ENCODE measurements at regions of chr3 and their contacts with region 1.

Region 1: DNA sequence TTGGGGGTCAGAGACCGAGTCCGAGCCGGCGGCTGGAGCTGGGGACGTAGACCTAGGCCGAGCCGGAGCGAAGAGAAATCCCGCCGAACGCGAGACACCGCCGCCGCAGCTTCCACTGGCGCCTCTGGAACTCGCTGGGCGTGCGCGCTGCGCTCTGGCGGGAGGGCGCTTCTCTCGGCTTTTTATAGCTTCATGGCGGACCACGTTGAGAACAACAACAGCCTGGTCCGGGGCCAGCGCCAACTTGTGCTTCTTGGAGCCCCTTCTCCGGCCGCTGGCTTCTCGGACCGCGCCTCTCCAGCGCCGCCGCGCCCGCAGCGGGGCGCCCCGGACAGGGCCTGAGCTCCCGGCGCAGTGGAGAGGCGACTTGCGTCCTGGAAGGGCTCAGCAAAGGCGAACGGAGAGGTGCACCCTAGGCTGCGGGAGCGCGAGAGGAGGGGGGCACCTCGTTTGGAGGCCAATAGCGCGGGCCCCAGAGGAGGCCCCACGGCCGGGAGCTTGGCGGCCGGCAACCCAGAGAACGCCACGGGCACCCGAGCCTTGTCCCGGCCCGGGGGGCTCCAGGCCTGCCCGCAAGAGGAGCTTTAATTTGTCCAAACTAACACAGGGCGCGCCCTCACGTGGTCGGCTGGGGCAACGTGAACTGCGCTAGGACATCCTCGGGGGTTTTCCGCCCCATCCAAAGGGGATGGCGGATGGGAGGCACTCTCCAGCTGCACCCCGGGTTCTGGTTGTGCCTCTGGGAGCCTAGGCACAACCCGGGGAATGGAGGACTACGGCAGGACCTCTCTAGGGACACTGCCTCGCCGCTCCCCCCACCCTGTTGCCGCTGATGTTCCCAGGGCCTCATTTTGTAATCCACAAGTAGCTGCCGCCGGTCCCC is 37.7 kb downstream of the HMCES start:
- DNase-seq: peak; percentile 92
- ATAC-seq: peak; percentile 48
- H3K4me3 Mint-ChIP-seq: peak overlapping the region; percentile 91
- H3K27ac Mint-ChIP-seq: peak overlapping the region; percentile 66
- H3K4me1 Mint-ChIP-seq: peaks cover 34% of the 10 kb centered on the region
- H3K27me3 Mint-ChIP-seq: no peaks in the 10 kb centered on the region

Region 2: DNA sequence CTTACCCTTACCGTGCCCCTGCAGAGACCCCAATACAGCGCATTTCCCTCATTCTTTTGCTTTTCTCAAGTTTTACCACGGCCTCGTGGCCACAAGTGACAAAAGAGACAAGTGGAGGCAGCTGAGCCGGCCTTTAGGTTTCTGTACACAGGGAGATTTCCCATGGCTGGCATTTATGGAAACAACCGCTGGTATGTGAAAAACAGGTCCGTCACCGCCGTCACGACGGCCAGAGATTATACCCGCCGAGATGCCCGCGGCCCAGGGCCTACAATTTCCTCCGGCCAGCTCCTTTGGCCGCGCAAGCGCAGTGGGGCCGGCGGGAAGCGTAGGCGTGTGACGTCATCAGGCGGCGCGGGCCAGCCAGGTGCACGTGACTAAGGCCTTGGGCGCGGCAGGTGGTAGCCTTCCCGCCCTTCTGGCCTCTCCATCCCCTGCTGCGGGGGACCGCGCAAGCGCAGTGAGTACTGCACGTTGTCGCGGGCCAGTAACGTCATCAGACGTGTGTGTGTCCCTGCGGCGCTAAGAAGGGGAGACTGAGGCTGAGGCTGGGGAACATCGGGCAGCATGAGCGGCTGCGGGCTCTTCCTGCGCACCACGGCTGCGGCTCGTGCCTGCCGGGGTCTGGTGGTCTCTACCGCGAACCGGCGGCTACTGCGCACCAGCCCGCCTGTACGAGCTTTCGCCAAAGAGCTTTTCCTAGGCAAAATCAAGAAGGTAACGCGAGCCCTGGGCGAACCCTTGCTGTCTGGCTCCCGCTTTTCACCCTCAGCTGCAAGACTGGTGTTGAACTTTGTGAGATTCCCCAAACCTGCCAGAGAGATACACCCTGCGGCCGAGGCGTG is 437.0 kb before region 1 on chr3 and contains the start of gene ACAD9:
- CTCF ChIA-PET with region 1: interaction called, 4 read pairs
- POLR2A ChIA-PET with region 1: interaction called, 15 read pairs
- DNase-seq: peak; percentile 97
- ATAC-seq: peak; percentile 96
- H3K4me3 Mint-ChIP-seq: peak within 1 kb of the TSS; percentile 83
- H3K27ac Mint-ChIP-seq: peak within 1 kb of the TSS; percentile 90
- H3K4me1 Mint-ChIP-seq: peaks cover 57% of the 10 kb centered on the region
- H3K27me3 Mint-ChIP-seq: peaks cover 4% of the 10 kb centered on the region
- total RNA-seq, gene ACAD9: 61.3 to 68.3 TPM

Region 3: GRCh38 chr3:129068291-129068886 is 248.0 kb before region 1 on chr3:
- CTCF ChIA-PET with region 1: interaction called, 3 read pairs
- POLR2A ChIA-PET with region 1: interaction called, 14 read pairs
- DNase-seq: peak; percentile 30
- ATAC-seq: peak; percentile 77
- H3K4me3 Mint-ChIP-seq: peak overlapping the region; percentile 58
- H3K27ac Mint-ChIP-seq: peak overlapping the region; percentile 39
- H3K4me1 Mint-ChIP-seq: peaks cover 25% of the 10 kb centered on the region
- H3K27me3 Mint-ChIP-seq: peaks cover 2% of the 10 kb centered on the region

Region 4: GRCh38 chr3:129183569-129184395 is 132.6 kb before region 1 on chr3 and contains the start of gene CNBP:
- CTCF ChIA-PET with region 1: no interaction called
- POLR2A ChIA-PET with region 1: interaction called, 11 read pairs
- DNase-seq: peak; percentile 94
- ATAC-seq: peak; percentile 98
- H3K4me3 Mint-ChIP-seq: peak within 1 kb of the TSS; percentile 92
- H3K27ac Mint-ChIP-seq: peak within 1 kb of the TSS; percentile 98
- H3K4me1 Mint-ChIP-seq: peaks cover 45% of the 10 kb centered on the region
- H3K27me3 Mint-ChIP-seq: no peaks in the 10 kb centered on the region
- total RNA-seq, gene CNBP: 263 to 273 TPM

Region 5: DNA sequence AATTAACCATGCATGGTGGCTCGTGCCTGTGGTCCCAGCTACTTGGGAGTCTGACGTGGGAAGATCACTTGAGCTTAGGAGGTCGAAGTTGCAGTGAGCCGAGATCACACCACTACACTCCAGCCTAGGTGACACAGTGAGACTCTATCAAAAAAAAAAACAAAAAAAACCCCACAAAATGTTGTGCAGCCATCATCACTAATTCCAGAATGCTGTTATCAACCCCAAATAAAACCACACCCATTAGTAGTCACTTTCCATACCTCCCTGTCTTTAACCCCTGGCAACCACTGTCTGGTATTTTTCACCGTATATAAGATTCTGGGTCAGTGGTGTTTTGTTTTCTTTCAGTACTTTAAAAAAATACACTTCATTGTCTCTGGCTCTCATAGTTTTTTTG is 21.1 kb before region 1 on chr3:
- CTCF ChIA-PET with region 1: interaction called, 11 read pairs
- POLR2A ChIA-PET with region 1: interaction called, 6 read pairs
- DNase-seq: no peak
- ATAC-seq: no peak
- H3K4me3 Mint-ChIP-seq: no peak overlapping the region
- H3K27ac Mint-ChIP-seq: no peak overlapping the region
- H3K4me1 Mint-ChIP-seq: no peaks in the 10 kb centered on the region
- H3K27me3 Mint-ChIP-seq: no peaks in the 10 kb centered on the region

Region 6: DNA sequence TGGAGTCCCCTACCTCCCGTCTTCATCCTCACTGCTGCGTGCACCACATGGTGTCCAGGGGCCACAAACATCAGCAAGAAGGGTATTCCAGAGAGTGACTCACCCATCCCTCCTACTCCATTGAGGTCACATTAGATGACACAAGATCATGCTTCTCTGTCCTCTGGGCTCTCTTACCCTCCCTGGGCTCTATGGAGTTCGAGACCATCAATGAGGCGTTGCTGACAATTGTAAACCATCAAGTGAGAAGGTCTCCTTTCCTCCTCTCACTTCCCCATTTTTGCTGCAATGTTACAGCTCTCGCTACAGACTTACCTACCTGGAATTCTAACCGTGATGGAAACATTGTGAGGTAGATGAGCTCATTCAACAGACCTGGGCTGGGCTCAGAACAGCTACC is 14.0 kb after region 1 on chr3:
- CTCF ChIA-PET with region 1: interaction called, 22 read pairs
- POLR2A ChIA-PET with region 1: interaction called, 25 read pairs
- DNase-seq: no peak
- ATAC-seq: no peak
- H3K4me3 Mint-ChIP-seq: no peak overlapping the region
- H3K27ac Mint-ChIP-seq: no peak overlapping the region
- H3K4me1 Mint-ChIP-seq: no peaks in the 10 kb centered on the region
- H3K27me3 Mint-ChIP-seq: no peaks in the 10 kb centered on the region

Region 7: DNA sequence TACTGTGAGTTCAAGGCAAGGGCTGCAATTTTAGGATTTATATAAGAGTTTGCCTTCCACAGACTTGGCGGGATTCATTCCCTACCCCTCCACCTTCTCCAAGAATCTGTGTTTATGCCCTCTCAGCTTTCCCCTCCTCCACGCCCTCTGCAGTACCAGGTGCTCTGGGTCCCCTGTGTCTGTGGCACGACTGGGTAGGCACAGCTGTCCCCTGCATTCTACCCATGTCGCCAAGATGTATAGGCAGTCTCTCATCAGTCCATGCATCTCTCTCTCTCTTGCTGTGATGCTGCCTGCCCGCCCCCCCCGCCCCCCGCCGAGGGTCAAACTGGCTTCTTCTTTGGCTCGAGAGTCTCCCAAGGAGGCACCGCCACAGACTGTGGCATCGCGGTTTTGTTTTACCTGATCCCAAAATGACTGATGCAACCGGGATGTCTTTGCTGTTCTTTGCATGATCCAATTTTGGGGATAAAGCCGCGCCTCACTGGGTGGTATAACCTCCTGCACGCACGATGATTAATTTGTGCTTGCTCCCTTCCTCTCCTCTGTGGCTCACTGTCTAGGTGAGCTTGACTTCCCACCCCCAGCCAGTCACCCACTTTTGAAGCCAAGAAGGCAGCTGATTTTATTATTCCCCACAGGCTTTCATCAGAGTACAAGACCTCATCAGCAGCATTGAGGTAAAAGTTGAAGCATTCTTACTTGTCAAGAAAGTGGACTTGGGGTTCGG is 68.4 kb after region 1 on chr3:
- CTCF ChIA-PET with region 1: no interaction called
- POLR2A ChIA-PET with region 1: no interaction called
- DNase-seq: no peak
- ATAC-seq: no peak
- H3K4me3 Mint-ChIP-seq: no peak overlapping the region
- H3K27ac Mint-ChIP-seq: no peak overlapping the region
- H3K4me1 Mint-ChIP-seq: no peaks in the 10 kb centered on the region
- H3K27me3 Mint-ChIP-seq: no peaks in the 10 kb centered on the region

Region 8: GRCh38 chr3:129439817-129440617 is 123.6 kb after region 1 on chr3 and contains the starts of genes IFT122 and MBD4:
- CTCF ChIA-PET with region 1: interaction called, 3 read pairs
- POLR2A ChIA-PET with region 1: interaction called, 45 read pairs
- DNase-seq: peak; percentile 100
- ATAC-seq: peak; percentile 92
- H3K4me3 Mint-ChIP-seq: peak within 1 kb of the TSS; percentile 98
- H3K27ac Mint-ChIP-seq: peak within 1 kb of the TSS; percentile 91
- H3K4me1 Mint-ChIP-seq: peaks cover 62% of the 10 kb centered on the region
- H3K27me3 Mint-ChIP-seq: no peaks in the 10 kb centered on the region
- total RNA-seq, gene IFT122: 22.3 to 25.6 TPM
- total RNA-seq, gene MBD4: 50.1 to 50.6 TPM

Measured in activated CD8-positive, alpha-beta T cell treated with anti-CD3 and anti-CD28 coated beads, Interleukin-2, amount 10 ng/mL, durations not matched to agents 7 days and 5 days (primary cell).